ENCODE measurements at regions of chr2 and their contacts with region 1.

Region 1: DNA sequence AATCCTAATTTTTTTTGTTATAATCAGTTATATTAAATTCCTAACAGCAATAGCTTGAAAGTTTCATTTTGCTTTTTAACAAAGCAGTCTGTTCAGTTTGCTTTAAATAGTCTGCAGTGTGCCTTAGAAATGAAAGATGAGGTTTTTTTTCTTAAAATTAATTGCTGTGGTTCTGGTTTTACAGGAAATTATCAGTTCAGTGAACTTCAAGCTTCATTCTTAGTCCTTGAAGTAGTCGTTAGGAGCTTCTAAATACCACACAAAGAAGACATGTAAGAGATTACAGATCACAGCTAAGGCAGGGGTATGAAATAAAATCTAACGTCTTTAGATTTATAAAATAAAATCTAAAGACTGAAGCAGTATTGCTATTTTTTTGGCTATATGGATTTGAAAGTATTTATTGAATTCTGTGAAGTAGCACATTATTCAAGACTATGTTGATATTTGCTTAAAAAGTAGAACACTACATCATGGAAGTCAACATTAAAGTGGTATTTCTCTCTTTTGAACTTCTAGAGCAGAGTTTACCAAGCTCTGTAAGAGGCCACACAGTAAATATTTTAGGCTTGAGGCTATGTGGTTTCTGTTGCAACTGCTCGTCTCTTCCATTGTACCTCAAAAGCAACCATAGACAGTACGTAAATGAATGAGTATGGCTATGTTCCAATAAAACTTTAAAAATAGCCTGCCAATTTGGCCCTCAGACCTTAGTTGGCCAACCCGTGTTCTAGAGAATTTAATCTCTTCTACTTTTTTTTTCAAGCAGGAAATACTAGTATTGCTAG is 81.5 kb upstream of the STON1 start:
- DNase-seq: peak; percentile 50
- ATAC-seq: peak; percentile 88
- H3K4me3 Mint-ChIP-seq: peak overlapping the region; percentile 66
- H3K27ac Mint-ChIP-seq: peak overlapping the region; percentile 91
- H3K4me1 Mint-ChIP-seq: peaks cover 65% of the 10 kb centered on the region
- H3K27me3 Mint-ChIP-seq: no peaks in the 10 kb centered on the region

Region 2: GRCh38 chr2:48383046-48383445 is 65.4 kb before region 1 on chr2:
- CTCF ChIA-PET with region 1: no interaction called
- POLR2A ChIA-PET with region 1: no interaction called
- DNase-seq: no peak
- ATAC-seq: no peak
- H3K4me3 Mint-ChIP-seq: no peak overlapping the region
- H3K27ac Mint-ChIP-seq: no peak overlapping the region
- H3K4me1 Mint-ChIP-seq: peaks cover 1% of the 10 kb centered on the region
- H3K27me3 Mint-ChIP-seq: no peaks in the 10 kb centered on the region

Region 3: GRCh38 chr2:48414980-48415835 is 33.3 kb before region 1 on chr2:
- CTCF ChIA-PET with region 1: interaction called, 10 read pairs
- POLR2A ChIA-PET with region 1: interaction called, 3 read pairs
- DNase-seq: peak; percentile 22
- ATAC-seq: peak; percentile 51
- H3K4me3 Mint-ChIP-seq: no peak overlapping the region
- H3K27ac Mint-ChIP-seq: peak overlapping the region; percentile 70
- H3K4me1 Mint-ChIP-seq: peaks cover 47% of the 10 kb centered on the region
- H3K27me3 Mint-ChIP-seq: no peaks in the 10 kb centered on the region